ENCODE measurements at regions of chr1 and their contacts with region 1.

Region 1: GRCh38 chr1:117541003-117541402 is 64.8 kb upstream of the TENT5C start:
- DNase-seq: peak; percentile 47 to 85
- ATAC-seq: peak; percentile 46 to 98 (median 84)
- H3K4me3 ChIP-seq: no peak overlapping the region
- H3K27ac ChIP-seq: no peak overlapping the region
- H3K4me1 ChIP-seq: peaks cover 4% of the 10 kb centered on the region
- H3K27me3 ChIP-seq: no peaks in the 10 kb centered on the region
- CTCF ChIP-seq: no peak

Region 2: GRCh38 chr1:117398957-117399356 is 142.0 kb before region 1 on chr1:
- intact Hi-C with region 1: no loop called
- DNase-seq: no peak
- ATAC-seq: no peak
- H3K4me3 ChIP-seq: no peak overlapping the region
- H3K27ac ChIP-seq: no peak overlapping the region
- H3K4me1 ChIP-seq: peaks cover 10% of the 10 kb centered on the region
- H3K27me3 ChIP-seq: no peaks in the 10 kb centered on the region
- CTCF ChIP-seq: no peak

Region 3: GRCh38 chr1:117586747-117587498 is 45.9 kb after region 1 on chr1:
- intact Hi-C with region 1: loop called in 1 of 2 experiments (anchors 5 kb)
- DNase-seq: no peak
- ATAC-seq: no peak
- H3K4me3 ChIP-seq: no peak overlapping the region
- H3K27ac ChIP-seq: no peak overlapping the region
- H3K4me1 ChIP-seq: peaks cover 5% of the 10 kb centered on the region
- H3K27me3 ChIP-seq: no peaks in the 10 kb centered on the region
- CTCF ChIP-seq: no peak

Region 4: DNA sequence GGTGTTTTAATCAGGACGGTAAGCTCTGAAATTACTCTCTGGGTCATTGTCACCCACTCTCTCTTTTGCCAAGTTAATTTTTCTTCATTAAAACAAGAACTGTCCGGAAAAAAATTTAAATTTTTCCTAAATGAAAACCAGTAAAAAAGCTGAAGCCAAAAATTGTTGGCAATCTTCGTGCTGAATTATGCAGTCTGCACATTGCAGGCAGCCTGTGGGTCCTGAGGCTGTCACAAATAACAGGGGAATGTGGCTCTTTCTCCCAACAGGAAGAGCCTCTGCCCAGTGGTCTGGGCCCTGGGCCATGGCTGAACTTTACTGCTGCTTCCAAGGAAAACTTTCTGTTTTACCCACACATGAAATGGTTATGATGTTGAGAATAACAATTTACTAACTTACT is 797.9 kb after region 1 on chr1:
- intact Hi-C with region 1: no loop called
- DNase-seq: no peak
- ATAC-seq: no peak
- H3K4me3 ChIP-seq: no peak overlapping the region
- H3K27ac ChIP-seq: no peak overlapping the region
- H3K4me1 ChIP-seq: peaks cover 7% of the 10 kb centered on the region
- H3K27me3 ChIP-seq: no peaks in the 10 kb centered on the region
- CTCF ChIP-seq: no peak

Measured in psoas muscle (tissue), 8 donors.